ENCODE measurements at regions of chr19 and their contacts with region 1.

Region 1: DNA sequence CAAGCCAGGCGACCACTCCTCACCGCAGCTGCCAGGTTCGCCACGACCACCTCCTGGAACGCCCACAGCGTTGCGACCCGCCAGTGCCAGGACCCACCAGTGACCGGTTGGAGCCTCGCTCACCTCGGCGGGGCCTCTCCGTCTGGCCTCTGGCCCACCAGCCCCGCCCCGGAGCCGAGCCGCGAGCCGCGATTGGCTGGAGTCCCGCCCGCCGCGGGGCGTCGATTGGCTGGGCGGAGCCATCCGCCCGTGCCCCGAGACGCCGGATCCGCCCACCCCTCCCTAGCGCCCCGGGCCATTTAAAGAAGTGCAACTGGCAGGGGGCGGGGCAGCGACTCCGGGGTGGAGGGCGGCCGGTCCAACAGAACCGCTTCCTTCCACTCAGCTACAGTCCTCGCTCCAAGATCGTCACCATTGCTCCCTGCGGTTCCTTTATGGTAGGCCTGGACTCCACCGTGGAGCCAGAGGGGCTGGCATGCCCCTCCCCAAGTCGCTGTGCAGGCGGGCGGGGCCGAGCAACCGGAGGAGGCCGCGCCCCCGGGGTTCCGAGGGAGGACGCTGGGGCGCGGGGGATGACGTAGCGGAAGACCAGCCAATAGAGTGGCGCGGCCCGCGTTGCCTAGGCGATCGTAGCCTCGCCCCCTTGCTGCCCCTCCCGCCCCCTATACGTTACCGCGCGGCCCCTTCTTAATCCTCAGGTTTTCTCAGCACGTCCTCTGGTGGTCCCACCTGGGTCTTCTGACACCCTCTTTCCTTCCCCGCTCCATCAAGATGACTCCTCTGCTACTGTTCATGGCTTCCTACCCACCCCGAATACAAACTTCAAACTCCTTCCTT is at the start of gene SERTAD3:
- DNase-seq: peak; percentile 98
- ATAC-seq: peak; percentile 68
- H3K4me3 Mint-ChIP-seq: peak within 1 kb of the TSS; percentile 98
- H3K27ac Mint-ChIP-seq: peak within 1 kb of the TSS; percentile 97
- H3K4me1 Mint-ChIP-seq: peaks cover 26% of the 10 kb centered on the region
- H3K27me3 Mint-ChIP-seq: no peaks in the 10 kb centered on the region
- CTCF ChIP-seq: no peak
- total RNA-seq, gene SERTAD3: 43.5 and 48.4 TPM in 2 replicates

Region 2: DNA sequence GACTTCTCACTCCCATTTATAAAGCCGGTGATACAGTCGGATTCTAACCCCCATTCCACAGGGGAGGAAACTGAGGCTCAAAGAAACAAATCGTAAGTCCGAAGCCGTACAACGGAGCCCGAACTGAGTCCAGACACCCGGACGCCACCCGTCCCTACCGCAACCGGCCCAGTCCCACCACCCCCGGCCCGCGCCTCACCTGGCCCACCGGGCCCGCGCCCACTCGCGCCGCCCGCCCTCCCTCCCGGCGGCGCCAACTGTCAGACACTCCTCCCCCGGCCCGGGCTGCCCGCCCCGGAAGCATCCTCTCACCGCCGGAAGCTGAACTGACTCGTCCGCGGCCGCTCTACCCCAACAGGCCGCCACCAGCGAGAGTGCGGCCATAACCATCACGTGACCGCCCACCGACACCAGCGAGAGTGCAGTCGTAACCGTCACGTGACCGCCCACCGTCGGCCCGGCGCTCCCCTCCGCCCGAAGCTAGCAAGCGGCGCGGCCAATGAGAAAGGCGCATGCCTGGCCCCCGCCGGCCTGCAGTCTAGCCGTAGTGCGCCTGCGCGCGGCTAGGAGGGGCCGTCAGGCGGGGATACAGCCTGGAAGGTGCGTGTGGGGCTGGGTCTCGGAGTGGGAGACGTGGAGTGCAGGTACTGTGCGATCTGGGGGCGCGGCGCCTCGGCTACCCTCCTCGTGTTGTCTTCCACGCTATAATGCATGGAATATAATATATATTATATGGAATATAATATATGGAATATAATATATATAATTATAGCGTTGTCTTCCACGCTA is 96.1 kb before region 1 on chr19 and contains the starts of genes C19orf47 and PLD3:
- CTCF ChIA-PET with region 1: no interaction called
- POLR2A ChIA-PET with region 1: interaction called, 15 read pairs
- intact Hi-C with region 1: loop called (anchors 1 kb)
- DNase-seq: peak; percentile 94
- ATAC-seq: peak; percentile 94
- H3K4me3 Mint-ChIP-seq: peak within 1 kb of the TSS; percentile 90
- H3K27ac Mint-ChIP-seq: peak within 1 kb of the TSS; percentile 85
- H3K4me1 Mint-ChIP-seq: peaks cover 28% of the 10 kb centered on the region
- H3K27me3 Mint-ChIP-seq: no peaks in the 10 kb centered on the region
- CTCF ChIP-seq: no peak
- total RNA-seq, gene C19orf47: 14.6 and 14.7 TPM in 2 replicates
- total RNA-seq, gene PLD3: 37.0 and 37.8 TPM in 2 replicates

Region 3: GRCh38 chr19:40433391-40434216 is 10.8 kb before region 1 on chr19:
- CTCF ChIA-PET with region 1: interaction called, 5 read pairs
- POLR2A ChIA-PET with region 1: interaction called, 48 read pairs
- intact Hi-C with region 1: loop called (anchors 1 kb)
- DNase-seq: peak; percentile 63
- ATAC-seq: peak; percentile 74
- H3K4me3 Mint-ChIP-seq: peak overlapping the region; percentile 87
- H3K27ac Mint-ChIP-seq: peak overlapping the region; percentile 94
- H3K4me1 Mint-ChIP-seq: peaks cover 39% of the 10 kb centered on the region
- H3K27me3 Mint-ChIP-seq: no peaks in the 10 kb centered on the region
- CTCF ChIP-seq: no peak

Region 4: GRCh38 chr19:40603389-40604135 is 159.2 kb after region 1 on chr19:
- CTCF ChIA-PET with region 1: no interaction called
- POLR2A ChIA-PET with region 1: interaction called, 4 read pairs
- intact Hi-C with region 1: loop called (anchors 5 kb)
- DNase-seq: peak; percentile 90
- ATAC-seq: peak; percentile 72
- H3K4me3 Mint-ChIP-seq: peak overlapping the region; percentile 85
- H3K27ac Mint-ChIP-seq: peak overlapping the region; percentile 77
- H3K4me1 Mint-ChIP-seq: peaks cover 69% of the 10 kb centered on the region
- H3K27me3 Mint-ChIP-seq: peaks cover 22% of the 10 kb centered on the region
- CTCF ChIP-seq: no peak

Region 5: GRCh38 chr19:40798223-40798996 is 354.0 kb after region 1 on chr19:
- CTCF ChIA-PET with region 1: no interaction called
- POLR2A ChIA-PET with region 1: interaction called, 4 read pairs
- intact Hi-C with region 1: loop called (anchors 5 kb)
- DNase-seq: peak; percentile 57
- ATAC-seq: peak; percentile 38
- H3K4me3 Mint-ChIP-seq: peak overlapping the region; percentile 95
- H3K27ac Mint-ChIP-seq: peak overlapping the region; percentile 99
- H3K4me1 Mint-ChIP-seq: peaks cover 62% of the 10 kb centered on the region
- H3K27me3 Mint-ChIP-seq: no peaks in the 10 kb centered on the region
- CTCF ChIP-seq: no peak